SK-N-SH (cell line): ENCODE measurements at regions of chr7 and their contacts with region 1.

Region 1: GRCh38 chr7:151759591-151760042 is 117.3 kb downstream of the PRKAG2 start:
- DNase-seq: peak; percentile 92
- H3K4me3 ChIP-seq: no peak overlapping the region
- H3K27ac ChIP-seq: no peak overlapping the region
- H3K4me1 ChIP-seq: peaks cover 20 to 21% of the 10 kb centered on the region in 2 experiments; a peak in 3 of 4 replicates
- H3K27me3 ChIP-seq: peaks cover 13% of the 10 kb centered on the region; the same call in 1 of the 2 replicates
- CTCF ChIP-seq: peak; percentile 99
- EP300 ChIP-seq: no peak
- RAD21 ChIP-seq: peak; percentile 99

Region 2: GRCh38 chr7:150631866-150632864 is 1127.5 kb before region 1 on chr7 and contains the start of gene GIMAP6:
- CTCF ChIA-PET with region 1: no interaction called
- POLR2A ChIA-PET with region 1: no interaction called
- DNase-seq: no peak
- H3K4me3 ChIP-seq: no peak within 1 kb of the TSS
- H3K27ac ChIP-seq: no peak within 1 kb of the TSS
- H3K4me1 ChIP-seq: no peaks in the 10 kb centered on the region
- H3K27me3 ChIP-seq: no peaks in the 10 kb centered on the region
- CTCF ChIP-seq: no peak
- EP300 ChIP-seq: no peak
- RAD21 ChIP-seq: no peak
- polyA plus RNA-seq, gene GIMAP6: 0.03 and 0.05 TPM in 2 replicates

Region 3: DNA sequence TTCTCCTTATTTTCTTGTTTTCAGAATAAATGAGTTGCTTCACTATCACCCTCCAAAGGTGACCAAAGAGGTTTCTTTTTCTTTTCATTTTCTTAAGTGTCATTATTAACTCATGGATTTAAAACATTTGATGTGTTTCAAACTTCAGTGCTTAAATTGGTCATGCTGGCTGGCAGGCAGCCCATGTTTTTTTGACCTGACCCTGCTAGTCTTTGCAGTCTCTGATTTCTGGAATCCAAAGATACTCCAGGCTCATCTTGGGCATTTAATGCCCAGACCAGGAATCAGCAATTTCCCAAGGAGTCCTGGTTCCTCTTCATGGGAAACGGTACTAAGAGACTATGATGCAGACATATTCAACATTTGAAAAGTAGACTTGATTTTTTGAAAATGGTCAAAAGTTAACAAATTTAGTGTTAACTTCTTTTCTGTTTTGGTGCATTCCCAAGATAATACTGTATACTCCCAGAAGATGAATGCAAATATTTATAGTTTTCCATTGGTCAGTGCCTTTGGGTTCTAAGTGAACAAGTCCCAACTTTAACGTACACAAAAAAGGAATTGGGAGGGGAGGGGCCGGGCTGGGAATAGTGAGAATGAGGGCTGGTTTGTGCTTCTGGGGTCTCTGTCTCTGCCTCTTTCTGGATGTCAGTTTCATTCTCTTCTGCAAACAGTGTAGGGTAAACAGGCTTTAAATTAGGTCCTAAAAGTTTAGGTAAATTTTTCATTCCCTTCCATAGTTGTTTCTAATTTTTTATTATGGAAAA is 398.2 kb before region 1 on chr7:
- CTCF ChIA-PET with region 1: interaction called, 50 read pairs
- POLR2A ChIA-PET with region 1: no interaction called
- DNase-seq: no peak
- H3K4me3 ChIP-seq: no peak overlapping the region
- H3K27ac ChIP-seq: no peak overlapping the region
- H3K4me1 ChIP-seq: no peaks in the 10 kb centered on the region; a peak in 1 of 4 replicates
- H3K27me3 ChIP-seq: no peaks in the 10 kb centered on the region
- CTCF ChIP-seq: no peak
- EP300 ChIP-seq: no peak
- RAD21 ChIP-seq: no peak

Region 4: DNA sequence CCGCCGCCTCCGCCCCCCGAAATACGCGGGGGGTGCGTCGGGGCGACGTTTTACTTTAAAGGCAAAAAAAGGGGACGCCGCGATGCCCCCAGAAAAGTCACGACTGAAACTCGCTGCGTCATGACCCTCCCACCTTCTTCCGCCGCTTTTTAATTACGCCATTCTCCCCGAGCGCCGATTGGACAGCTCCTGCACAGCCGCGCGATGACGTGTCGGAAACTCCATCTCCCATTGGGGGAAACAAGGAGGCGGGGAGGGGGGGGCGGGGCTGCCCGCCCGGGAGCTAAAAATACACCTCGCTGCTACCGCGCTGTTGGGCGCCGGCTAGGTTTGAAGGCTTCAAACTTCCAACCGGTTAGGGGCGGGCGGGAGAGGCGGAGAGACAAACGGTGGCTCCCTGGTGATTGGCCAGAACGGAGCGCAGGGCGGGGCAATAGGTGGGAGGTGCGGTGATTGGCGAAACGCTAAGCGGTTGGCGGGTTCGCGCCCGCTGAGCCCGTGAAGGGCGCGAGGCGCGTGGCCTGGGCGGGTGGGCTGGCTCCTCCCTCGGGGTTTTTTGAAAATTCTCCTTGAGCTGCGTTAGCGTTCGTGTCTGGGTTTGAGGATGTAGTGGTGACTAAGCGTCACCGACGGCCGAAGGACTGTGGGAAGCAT is 239.7 kb before region 1 on chr7 and contains the start of gene RHEB:
- CTCF ChIA-PET with region 1: interaction called, 18 read pairs
- POLR2A ChIA-PET with region 1: no interaction called
- DNase-seq: peak; percentile 99
- H3K4me3 ChIP-seq: peak within 1 kb of the TSS; percentile 77 to 81
- H3K27ac ChIP-seq: peak within 1 kb of the TSS; percentile 91 to 95
- H3K4me1 ChIP-seq: peaks cover 6 to 19% of the 10 kb centered on the region in 2 experiments; a peak in 2 of 4 replicates
- H3K27me3 ChIP-seq: no peaks in the 10 kb centered on the region
- CTCF ChIP-seq: no peak
- EP300 ChIP-seq: peak in 1 of 2 experiments; percentile 35; a peak in 1 of 4 replicates
- RAD21 ChIP-seq: no peak
- polyA plus RNA-seq, gene RHEB: 87.3 and 90.5 TPM in 2 replicates

Region 5: DNA sequence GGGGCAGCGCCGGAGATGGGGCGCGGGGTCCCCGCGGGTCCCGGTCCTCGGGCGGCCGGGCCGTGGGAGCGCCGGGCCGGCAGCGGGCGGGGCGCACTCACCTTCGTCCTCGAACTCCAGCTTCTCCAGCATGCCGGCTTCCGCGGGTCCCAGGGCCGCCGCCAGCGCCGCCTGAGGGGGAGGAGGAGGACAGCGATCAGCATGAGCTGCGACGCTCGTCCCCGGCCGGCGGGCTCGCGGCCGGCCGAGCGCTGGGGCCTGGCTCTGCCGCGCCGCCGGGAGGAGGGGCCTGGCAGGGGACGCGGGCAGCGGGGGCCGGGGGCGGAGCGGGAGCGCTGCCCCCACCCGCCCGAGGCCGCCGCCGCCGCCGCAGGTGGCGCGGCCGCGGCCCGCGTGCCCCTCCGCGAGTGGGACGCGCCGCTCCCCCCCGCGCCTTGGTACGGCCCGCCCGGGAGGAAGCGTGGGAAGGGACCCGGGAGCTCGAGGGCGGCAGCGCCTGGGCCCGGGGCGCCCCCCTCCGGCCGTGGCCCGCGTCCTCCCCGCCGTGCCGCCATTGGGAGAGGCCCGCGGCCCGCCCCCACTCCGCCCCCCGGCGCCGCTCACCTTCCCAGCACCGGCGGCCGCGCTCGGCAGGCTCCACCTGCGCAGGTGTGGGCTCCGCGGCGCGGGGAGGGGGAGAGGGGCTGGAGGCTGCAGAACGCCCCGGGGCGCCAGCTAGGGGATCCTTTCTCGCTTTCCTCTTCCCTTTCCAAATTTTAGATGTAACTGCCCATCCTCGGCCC is 127.5 kb before region 1 on chr7:
- CTCF ChIA-PET with region 1: interaction called, 203 read pairs
- POLR2A ChIA-PET with region 1: no interaction called
- DNase-seq: peak; percentile 97
- H3K4me3 ChIP-seq: peak overlapping the region; percentile 83 to 87
- H3K27ac ChIP-seq: peak overlapping the region; percentile 53 to 55
- H3K4me1 ChIP-seq: peaks cover 4 to 15% of the 10 kb centered on the region in 2 experiments; a peak in 2 of 4 replicates
- H3K27me3 ChIP-seq: no peaks in the 10 kb centered on the region
- CTCF ChIP-seq: peak; percentile 38
- EP300 ChIP-seq: no peak
- RAD21 ChIP-seq: peak; percentile 49

Region 6: GRCh38 chr7:151696721-151697514 is 62.7 kb before region 1 on chr7:
- CTCF ChIA-PET with region 1: interaction called, 12 read pairs
- POLR2A ChIA-PET with region 1: no interaction called
- DNase-seq: peak; percentile 73
- H3K4me3 ChIP-seq: no peak overlapping the region
- H3K27ac ChIP-seq: no peak overlapping the region
- H3K4me1 ChIP-seq: peaks cover 17 to 34% of the 10 kb centered on the region in 2 experiments; a peak in 3 of 4 replicates
- H3K27me3 ChIP-seq: no peaks in the 10 kb centered on the region
- CTCF ChIP-seq: no peak
- EP300 ChIP-seq: no peak
- RAD21 ChIP-seq: peak; percentile 21; the same call in 1 of the 2 replicates

Region 7: GRCh38 chr7:151748733-151749132 is 10.9 kb before region 1 on chr7:
- CTCF ChIA-PET with region 1: interaction called, 100 read pairs
- POLR2A ChIA-PET with region 1: no interaction called
- DNase-seq: no peak
- H3K4me3 ChIP-seq: no peak overlapping the region
- H3K27ac ChIP-seq: no peak overlapping the region
- H3K4me1 ChIP-seq: no peaks in the 10 kb centered on the region; a peak in 1 of 4 replicates
- H3K27me3 ChIP-seq: no peaks in the 10 kb centered on the region
- CTCF ChIP-seq: no peak
- EP300 ChIP-seq: no peak
- RAD21 ChIP-seq: no peak